Heart right ventricle (tissue), 16 donors: ENCODE measurements at regions of chr7 and their contacts with region 1.

Region 1: DNA sequence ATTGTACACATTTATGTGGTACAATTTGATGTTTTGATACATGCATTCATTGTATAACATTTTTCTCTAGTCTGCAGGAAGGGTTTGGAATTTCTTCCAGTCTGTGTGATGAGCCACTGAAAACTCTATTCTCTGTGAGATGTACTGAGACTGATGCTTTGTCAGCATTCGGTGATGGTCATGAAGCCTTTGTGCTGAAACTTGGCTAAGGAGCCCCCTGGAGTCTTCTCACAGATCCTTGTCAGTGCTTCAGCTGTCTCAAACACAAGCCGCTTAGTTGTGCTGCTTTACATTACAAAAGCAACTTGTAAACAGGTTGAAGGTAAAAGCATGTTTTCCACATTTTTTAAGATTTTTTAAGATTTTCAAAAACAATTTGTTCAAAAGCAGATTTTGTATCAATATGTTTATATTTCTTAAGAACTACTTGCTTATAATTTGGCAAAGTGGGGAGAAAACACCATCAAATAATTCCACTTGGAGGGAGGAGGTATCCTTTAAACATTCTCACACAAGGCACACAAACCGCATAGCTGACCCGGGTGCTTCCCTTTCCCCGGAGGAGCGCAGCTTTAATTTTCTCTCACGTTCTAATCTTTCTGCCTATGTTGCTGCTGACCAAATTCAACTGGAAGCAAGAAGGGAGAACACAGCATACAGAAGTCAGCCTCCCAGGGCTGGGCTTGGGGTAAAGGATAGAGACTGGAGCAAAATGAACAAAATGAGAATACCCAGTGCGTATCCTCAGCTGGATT is 249.8 kb upstream of the VSTM2A start:
- DNase-seq: no peak
- ATAC-seq: no peak
- H3K4me3 ChIP-seq: no peak overlapping the region
- H3K27ac ChIP-seq: no peak overlapping the region
- H3K4me1 ChIP-seq: no peaks in the 10 kb centered on the region
- H3K27me3 ChIP-seq: no peaks in the 10 kb centered on the region
- CTCF ChIP-seq: no peak

Region 2: DNA sequence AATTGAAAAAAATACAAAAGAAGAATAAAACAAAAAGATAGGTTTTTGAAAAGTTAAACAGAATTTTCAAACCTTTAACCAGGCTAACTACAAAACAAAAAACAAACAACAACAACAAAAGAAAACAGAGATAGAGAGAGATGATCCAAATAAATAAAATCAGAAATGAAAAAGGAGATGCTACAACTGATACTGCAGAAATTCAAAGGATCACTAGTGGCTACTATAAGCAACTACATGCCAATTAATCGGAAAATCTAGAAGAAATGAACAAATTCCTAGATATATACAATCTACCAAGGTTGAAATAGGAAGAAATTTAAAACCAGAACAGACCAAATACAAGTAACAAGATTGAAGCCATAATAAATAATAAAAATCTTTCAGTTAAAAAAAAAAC is 76.9 kb before region 1 on chr7:
- intact Hi-C with region 1: loop called in 1 of 10 experiments (anchors 10 kb)
- DNase-seq: no peak
- ATAC-seq: no peak
- H3K4me3 ChIP-seq: no peak overlapping the region
- H3K27ac ChIP-seq: no peak overlapping the region
- H3K4me1 ChIP-seq: no peaks in the 10 kb centered on the region
- H3K27me3 ChIP-seq: no peaks in the 10 kb centered on the region
- CTCF ChIP-seq: peak in 1 of 9 donors; percentile 11